Ovary (tissue), 10 donors: ENCODE measurements at regions of chr18 and their contacts with region 1.

Region 1: DNA sequence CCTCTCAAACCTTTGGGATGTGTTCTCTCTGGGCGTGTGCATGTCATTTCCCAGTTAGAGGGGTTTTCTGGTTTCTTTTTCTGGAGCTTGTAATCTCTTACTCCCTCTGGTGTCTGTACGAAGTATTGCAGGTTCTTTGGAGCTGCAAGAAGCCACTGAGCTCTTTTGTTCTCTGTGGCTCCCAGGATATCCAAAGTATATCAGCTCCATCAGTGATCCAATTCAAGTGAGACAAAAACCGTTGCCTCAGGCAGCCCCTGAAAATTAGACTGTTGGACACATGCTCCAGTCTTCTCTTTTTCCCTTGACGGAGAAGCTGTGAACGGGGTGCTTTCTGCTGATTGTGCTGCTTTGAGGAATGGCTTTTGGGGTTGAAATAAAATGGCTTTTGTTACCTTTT is 59.0 kb upstream of the LDLRAD4 start:
- DNase-seq: no peak
- H3K4me3 ChIP-seq: no peak overlapping the region
- H3K27ac ChIP-seq: no peak overlapping the region
- H3K4me1 ChIP-seq: no peaks in the 10 kb centered on the region
- H3K27me3 ChIP-seq: no peaks in the 10 kb centered on the region
- CTCF ChIP-seq: peak; percentile 28 to 33 (median 31)
- EP300 ChIP-seq: no peak
- POLR2A ChIP-seq: no peak

Region 2: GRCh38 chr18:11512096-11513030 is 1647.2 kb before region 1 on chr18:
- intact Hi-C with region 1: loop called in 1 of 4 experiments (anchors 5 kb)
- DNase-seq: no peak
- H3K4me3 ChIP-seq: no peak overlapping the region
- H3K27ac ChIP-seq: no peak overlapping the region
- H3K4me1 ChIP-seq: no peaks in the 10 kb centered on the region
- H3K27me3 ChIP-seq: no peaks in the 10 kb centered on the region
- CTCF ChIP-seq: no peak
- EP300 ChIP-seq: no peak
- POLR2A ChIP-seq: no peak

Region 3: GRCh38 chr18:13095466-13095865 is 64.1 kb before region 1 on chr18:
- intact Hi-C with region 1: no loop called
- DNase-seq: no peak
- H3K4me3 ChIP-seq: no peak overlapping the region
- H3K27ac ChIP-seq: no peak overlapping the region
- H3K4me1 ChIP-seq: no peaks in the 10 kb centered on the region
- H3K27me3 ChIP-seq: no peaks in the 10 kb centered on the region
- CTCF ChIP-seq: no peak
- EP300 ChIP-seq: no peak
- POLR2A ChIP-seq: no peak

Region 4: DNA sequence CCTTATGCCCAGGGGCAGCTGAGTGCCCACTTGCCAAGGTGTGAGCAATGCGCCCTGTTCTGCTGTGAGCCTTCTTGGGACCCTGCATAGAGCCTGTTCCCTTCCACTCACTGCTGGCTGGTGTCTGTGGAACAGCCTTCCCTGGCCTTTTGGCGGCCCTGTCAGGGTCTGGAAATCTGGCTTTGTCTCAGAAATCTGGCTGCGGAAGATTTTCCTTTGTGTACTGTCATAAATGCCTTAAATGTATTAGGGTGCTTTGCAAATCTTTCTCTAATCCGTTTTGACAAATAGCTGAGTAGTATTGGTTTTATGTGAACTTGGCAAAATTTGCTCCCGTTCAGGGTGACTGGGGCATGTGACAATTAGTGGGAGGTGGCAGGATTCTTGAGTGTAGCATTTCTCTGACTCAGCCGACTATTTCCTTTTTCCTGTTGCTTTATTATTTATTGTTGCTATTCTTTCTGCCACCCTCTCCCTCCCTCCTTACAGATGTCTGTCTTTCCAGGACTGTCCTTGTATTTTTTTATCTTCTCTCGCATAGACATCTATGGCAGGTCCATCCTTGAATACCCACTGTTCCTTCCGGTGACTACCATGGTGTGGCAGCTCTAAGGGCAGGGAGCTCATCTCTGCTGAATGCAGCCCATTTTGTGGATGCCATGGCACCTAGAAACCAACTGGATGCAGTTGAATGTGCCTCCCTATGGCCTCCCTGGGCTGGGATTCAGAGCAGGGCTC is 100.8 kb after region 1 on chr18:
- intact Hi-C with region 1: no loop called
- DNase-seq: no peak
- H3K4me3 ChIP-seq: no peak overlapping the region
- H3K27ac ChIP-seq: no peak overlapping the region
- H3K4me1 ChIP-seq: peaks cover 3% of the 10 kb centered on the region
- H3K27me3 ChIP-seq: no peaks in the 10 kb centered on the region
- CTCF ChIP-seq: no peak
- EP300 ChIP-seq: no peak
- POLR2A ChIP-seq: no peak